Transverse colon (tissue), 4 donors: ENCODE measurements at regions of chr5 and their contacts with region 1.

Region 1: DNA sequence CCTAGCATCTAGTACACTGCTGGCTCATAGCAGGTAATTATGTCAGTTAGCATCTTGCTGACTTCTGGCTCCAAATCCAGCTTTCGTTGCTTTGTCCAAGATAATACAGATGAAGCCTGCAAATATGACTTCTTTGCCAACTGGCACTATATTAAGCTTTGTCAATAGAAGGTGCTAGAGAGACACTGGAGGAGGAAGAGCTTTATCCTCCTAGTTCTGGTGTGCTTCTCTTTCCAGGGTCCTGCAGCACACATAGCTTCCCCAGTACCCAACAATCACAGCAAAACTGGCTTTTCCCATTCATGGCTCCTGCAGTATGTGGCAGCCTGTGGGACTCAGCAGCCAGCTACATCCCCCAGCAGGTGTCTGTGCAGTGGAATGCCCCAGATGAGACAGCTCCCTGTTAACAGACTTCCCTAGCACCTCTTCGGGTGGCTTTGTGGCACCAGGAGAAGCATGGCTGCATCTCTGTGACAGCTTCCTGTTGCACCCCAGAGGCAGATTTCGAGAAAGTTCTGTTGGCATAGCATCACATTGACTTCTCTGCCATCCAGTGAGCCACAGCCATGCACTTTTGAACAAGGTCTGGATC is 147.8 kb downstream of the OXCT1 start:
- DNase-seq: no peak
- H3K4me3 ChIP-seq: no peak overlapping the region
- H3K27ac ChIP-seq: no peak overlapping the region
- H3K4me1 ChIP-seq: peaks cover 0 to 7% (median 2%) of the 10 kb centered on the region in 4 donors
- H3K27me3 ChIP-seq: no peaks in the 10 kb centered on the region
- CTCF ChIP-seq: no peak
- EP300 ChIP-seq: no peak
- POLR2A ChIP-seq: no peak

Region 2: DNA sequence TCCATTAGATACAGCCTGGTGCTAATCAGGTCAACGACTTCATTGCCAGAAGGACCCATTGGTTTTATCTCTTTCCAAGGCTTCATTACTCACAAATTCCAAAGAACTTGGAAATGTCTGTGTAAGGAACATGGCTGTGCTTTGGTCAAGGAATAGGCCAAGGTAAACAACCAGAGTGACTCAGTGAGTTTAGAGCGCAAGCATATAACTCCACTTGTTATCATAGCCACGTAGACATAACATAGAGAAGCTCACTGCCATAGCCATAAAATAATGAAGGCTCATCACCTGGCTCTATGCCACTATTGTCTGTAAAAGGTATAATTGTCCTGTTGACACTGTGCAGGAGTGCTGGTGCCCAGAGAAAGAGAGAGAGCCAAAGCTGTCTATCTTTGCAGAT is 72.8 kb before region 1 on chr5:
- in situ Hi-C with region 1: no loop called
- intact Hi-C with region 1: loop called (anchors 2 kb)
- DNase-seq: no peak
- H3K4me3 ChIP-seq: no peak overlapping the region
- H3K27ac ChIP-seq: no peak overlapping the region
- H3K4me1 ChIP-seq: no peaks in the 10 kb centered on the region
- H3K27me3 ChIP-seq: no peaks in the 10 kb centered on the region
- CTCF ChIP-seq: no peak
- EP300 ChIP-seq: no peak
- POLR2A ChIP-seq: no peak